Natural killer cell (primary cell): ENCODE measurements at regions of chr2 and their contacts with region 1.

Region 1: GRCh38 chr2:219160186-219161017 is at the start of gene NHEJ1:
- DNase-seq: peak; percentile 94 to 96
- ATAC-seq: peak; percentile 86 to 98 (median 90)
- H3K4me3 ChIP-seq: peak within 1 kb of the TSS; percentile 76
- H3K4me3 Mint-ChIP-seq: peak within 1 kb of the TSS; percentile 95
- H3K27ac ChIP-seq: peak within 1 kb of the TSS; percentile 80
- H3K27ac Mint-ChIP-seq: peak within 1 kb of the TSS; percentile 92 to 94
- H3K4me1 ChIP-seq: peaks cover 13% of the 10 kb centered on the region
- H3K4me1 Mint-ChIP-seq: peaks cover 16 to 31% of the 10 kb centered on the region in 2 donors
- H3K27me3 ChIP-seq: no peaks in the 10 kb centered on the region
- H3K27me3 Mint-ChIP-seq: no peaks in the 10 kb centered on the region
- CTCF ChIP-seq: peak; percentile 99
- total RNA-seq, gene NHEJ1: 9.9 to 12.7 (median 11.0) TPM

Region 2: DNA sequence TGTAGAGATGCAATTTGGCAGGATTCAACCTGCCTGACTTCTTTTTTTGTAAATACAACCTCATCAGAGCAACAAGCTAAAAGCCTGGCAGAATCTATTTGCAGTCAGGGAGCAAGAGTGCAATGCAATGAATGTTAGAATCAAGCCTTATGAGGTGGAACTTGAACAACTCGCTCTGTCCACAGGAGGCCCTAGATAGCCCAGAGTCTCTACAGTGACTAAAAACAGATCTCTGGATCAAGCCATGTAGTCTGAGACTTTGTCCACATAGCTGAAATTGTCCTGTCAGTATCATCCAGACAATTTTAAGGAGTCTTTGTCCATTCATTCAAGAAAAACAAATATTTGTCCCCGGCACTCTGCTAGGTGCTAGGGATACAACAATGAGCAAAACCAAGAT is 233.0 kb before region 1 on chr2:
- intact Hi-C with region 1: no loop called
- DNase-seq: no peak
- ATAC-seq: no peak
- H3K4me3 ChIP-seq: no peak overlapping the region
- H3K4me3 Mint-ChIP-seq: no peak overlapping the region
- H3K27ac ChIP-seq: no peak overlapping the region
- H3K27ac Mint-ChIP-seq: no peak overlapping the region
- H3K4me1 ChIP-seq: no peaks in the 10 kb centered on the region
- H3K4me1 Mint-ChIP-seq: no peaks in the 10 kb centered on the region
- H3K27me3 ChIP-seq: peaks cover 5% of the 10 kb centered on the region
- H3K27me3 Mint-ChIP-seq: peaks cover 32 to 58% of the 10 kb centered on the region in 2 donors
- CTCF ChIP-seq: no peak

Region 3: DNA sequence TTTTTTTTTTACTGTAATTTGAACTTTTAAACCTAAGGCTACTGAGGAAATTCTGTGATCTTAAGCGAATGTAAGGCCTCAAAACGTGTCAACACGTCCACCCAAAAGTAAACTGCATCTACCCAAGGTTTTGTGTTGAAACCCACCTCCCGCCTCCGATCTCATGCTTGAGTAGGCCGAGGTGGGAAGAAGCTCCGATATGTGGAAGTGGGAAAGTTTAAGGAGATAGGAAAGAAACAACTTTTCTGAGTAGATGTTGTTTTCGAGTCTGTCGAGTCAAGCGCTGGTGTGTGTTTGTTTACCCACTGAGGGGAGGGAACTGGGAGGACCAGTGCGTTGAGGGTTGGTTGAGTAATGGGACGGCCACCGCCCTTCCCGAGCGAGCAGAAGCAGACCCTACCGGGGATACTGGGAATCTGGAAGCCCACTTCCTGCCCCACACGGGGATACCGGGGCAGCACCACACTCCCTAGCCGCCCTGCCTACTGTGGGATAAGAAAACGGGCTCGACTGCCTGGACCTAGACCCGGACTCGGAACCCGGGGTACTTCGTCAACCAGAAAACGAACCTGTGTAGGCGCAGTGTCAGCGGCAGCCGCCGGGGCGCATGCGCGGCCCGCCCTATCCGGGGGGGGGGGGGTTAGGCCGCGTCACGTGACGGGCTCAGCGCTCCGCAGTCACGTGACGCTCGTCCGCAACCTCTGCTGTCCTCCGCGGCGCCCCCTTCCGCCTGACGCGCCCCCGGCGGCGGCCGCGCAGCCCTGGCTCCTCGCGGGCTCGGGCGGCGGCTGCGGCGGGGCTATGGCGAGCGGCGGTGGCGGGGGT is 17.4 kb after region 1 on chr2 and contains the start of gene RETREG2:
- intact Hi-C with region 1: loop called (anchors 1 kb)
- DNase-seq: peak; percentile 79 to 96
- ATAC-seq: peak; percentile 57 to 71 (median 63)
- H3K4me3 ChIP-seq: peak within 1 kb of the TSS; percentile 61
- H3K4me3 Mint-ChIP-seq: peak within 1 kb of the TSS; percentile 97
- H3K27ac ChIP-seq: peak within 1 kb of the TSS; percentile 98
- H3K27ac Mint-ChIP-seq: peak within 1 kb of the TSS; percentile 99 to 100
- H3K4me1 ChIP-seq: peaks cover 43% of the 10 kb centered on the region
- H3K4me1 Mint-ChIP-seq: peaks cover 47 to 67% of the 10 kb centered on the region in 2 donors
- H3K27me3 ChIP-seq: no peaks in the 10 kb centered on the region
- H3K27me3 Mint-ChIP-seq: no peaks in the 10 kb centered on the region
- CTCF ChIP-seq: peak; percentile 38
- total RNA-seq, gene RETREG2: 77.0 to 81.9 (median 79.0) TPM

Region 4: DNA sequence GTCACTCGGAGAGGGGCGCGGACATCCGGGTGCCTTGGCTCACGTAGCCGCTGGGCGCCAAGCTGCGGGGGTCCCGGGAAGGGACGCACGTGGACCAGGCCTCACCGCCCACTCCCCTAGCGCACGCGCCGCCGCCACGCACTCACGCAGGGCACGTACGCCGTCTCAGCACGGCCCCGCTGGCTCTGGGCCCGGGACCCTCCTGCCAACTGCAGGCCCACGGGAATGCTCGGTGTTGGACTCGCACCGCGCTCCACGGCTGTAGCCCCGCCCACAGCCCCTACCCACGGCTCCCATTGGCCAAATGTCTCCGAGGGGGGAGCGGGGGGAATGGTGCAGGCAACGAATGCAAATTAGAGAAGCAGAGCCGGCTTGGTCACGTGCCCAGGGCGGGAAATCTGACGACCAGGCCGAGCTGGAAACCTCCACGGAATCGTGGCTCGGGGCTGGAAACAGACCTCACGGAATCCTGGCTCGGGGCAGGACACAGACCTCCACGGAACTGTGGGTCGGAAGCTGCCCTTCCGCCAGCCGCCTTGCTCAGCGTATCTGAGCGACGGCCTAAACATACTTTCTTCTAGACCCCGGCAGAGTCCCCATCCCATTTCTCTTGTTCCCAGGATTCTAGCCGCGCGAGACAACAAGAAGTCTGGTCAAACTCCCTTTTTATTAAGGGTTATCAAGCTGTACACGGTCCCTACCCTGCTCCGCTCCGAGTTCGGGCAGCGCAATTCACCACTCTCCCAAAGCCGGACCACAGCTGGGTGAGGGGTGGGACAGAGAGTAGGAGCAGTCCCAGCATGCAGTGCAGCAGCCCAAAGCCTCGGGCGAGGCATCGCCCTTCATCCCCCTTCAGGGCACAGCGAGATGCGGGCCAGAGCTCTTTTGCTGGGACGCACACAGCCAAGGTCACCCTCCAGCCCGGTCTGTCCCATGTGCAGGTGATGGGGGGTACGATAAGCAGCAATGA is 58.6 kb after region 1 on chr2 and contains the start of gene ABCB6:
- intact Hi-C with region 1: loop called (anchors 2 kb)
- DNase-seq: peak; percentile 73 to 92
- ATAC-seq: peak; percentile 83 to 89 (median 87)
- H3K4me3 ChIP-seq: peak within 1 kb of the TSS; percentile 46
- H3K4me3 Mint-ChIP-seq: peak within 1 kb of the TSS; percentile 83
- H3K27ac ChIP-seq: peak within 1 kb of the TSS; percentile 18
- H3K27ac Mint-ChIP-seq: peak within 1 kb of the TSS; percentile 62 to 75
- H3K4me1 ChIP-seq: peaks cover 25% of the 10 kb centered on the region
- H3K4me1 Mint-ChIP-seq: peaks cover 6 to 17% of the 10 kb centered on the region in 2 donors
- H3K27me3 ChIP-seq: no peaks in the 10 kb centered on the region
- H3K27me3 Mint-ChIP-seq: no peaks in the 10 kb centered on the region
- CTCF ChIP-seq: no peak
- total RNA-seq, gene ABCB6: 0.93 to 3.4 (median 1.9) TPM

Region 5: DNA sequence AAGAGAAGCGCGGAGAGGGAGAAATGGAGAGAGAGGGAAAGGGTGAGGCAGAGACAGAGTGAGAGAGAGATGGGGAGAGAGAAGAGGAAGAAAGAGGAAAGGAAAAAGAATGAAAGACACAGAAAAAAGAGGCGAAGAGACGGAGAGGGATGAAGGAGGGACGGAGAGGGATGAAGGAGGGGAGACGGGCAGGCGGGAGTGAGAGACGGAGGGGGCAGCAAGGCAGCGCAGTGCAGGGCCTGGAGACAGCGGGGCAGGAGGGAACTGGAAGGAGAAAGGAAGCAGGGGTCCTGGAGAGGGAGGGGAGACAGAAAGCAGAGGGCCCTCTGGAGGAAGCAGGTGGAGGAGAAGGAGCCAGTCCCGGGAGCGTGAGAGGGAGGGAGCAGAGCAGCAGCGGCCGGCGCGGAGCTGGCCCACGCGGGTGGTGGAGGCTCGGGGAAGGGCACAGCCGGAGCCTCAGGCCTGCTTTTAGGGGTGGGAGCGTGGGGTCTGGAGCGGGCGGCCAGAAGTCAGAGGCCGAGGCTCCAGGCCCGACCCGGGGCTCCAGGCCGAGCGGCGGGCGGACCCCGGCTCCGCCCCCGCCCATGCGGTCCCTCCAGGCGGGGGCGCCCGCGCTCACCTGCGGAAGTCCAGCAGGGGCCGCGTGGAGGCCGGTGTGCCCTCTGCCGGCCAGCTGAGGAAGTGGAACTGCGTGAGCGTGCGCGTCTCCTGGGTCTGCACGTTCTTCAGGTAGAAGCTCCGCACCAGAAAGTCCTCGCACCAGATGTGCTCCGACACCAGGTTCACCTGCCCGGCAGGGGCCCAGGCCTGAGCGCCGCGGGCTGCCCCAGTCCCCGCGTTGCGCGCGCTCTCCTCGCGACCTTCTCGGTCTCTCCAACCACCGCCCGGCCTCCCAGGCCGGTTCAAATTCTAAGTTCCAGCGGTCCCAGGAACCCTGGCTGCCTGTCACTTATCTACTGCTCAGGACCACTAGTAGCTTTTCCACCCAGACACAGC is 134.3 kb after region 1 on chr2:
- intact Hi-C with region 1: loop called (anchors 1 kb)
- DNase-seq: peak; percentile 88 to 96
- ATAC-seq: peak; percentile 95 to 97 (median 95)
- H3K4me3 ChIP-seq: peak overlapping the region; percentile 45
- H3K4me3 Mint-ChIP-seq: peak overlapping the region; percentile 73
- H3K27ac ChIP-seq: peak overlapping the region; percentile 69
- H3K27ac Mint-ChIP-seq: peak overlapping the region; percentile 78 to 80
- H3K4me1 ChIP-seq: peaks cover 14% of the 10 kb centered on the region
- H3K4me1 Mint-ChIP-seq: peaks cover 6 to 17% of the 10 kb centered on the region in 2 donors
- H3K27me3 ChIP-seq: peaks cover 7% of the 10 kb centered on the region
- H3K27me3 Mint-ChIP-seq: peaks cover 0 to 4% of the 10 kb centered on the region in 2 donors
- CTCF ChIP-seq: peak; percentile 99